ENCODE measurements at regions of chr22 and their contacts with region 1.

Region 1: DNA sequence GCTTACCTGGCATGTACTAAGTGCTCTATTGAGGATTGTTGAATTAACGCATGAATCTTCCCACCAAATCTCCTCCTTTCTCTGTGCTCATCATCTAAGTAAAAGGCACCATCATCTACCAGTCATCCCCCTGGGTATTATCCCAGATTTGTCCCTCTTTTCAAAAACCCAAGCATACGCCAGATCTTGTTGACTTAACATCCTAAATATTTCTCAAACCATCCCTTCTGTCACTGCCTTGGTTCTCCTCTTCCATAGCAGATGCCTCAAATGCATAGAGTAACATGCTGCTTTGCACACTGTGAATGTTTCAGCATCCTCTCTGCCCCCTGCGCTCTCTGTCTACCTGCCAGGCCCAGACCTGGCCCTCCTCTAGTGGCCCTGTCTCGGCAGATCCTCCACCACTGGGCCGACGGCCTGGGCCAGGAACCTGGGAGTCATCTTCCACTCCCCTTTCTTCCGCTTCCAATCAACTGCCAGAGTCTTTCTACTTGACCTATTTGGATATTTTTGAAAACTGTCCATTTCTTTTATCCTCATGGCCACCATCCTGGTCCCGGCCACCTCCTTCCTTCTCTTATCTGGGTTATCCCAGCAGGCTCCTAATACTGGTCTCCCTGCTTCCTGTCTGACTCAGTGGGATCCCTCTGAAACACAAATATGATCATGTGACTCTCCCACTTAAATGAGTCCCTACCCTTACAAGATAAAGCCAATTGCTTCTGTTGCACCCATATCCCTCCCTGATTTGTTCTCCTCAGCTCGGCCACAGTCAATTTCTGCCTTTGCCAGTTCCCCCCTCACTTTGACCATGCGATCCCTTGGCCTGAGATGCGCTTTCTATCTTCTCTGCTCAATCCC is 3.4 kb upstream of the TAB1 start:
- DNase-seq: no peak
- H3K4me3 ChIP-seq: no peak overlapping the region
- H3K4me3 Mint-ChIP-seq: peak overlapping the region in 2 of 8 donors; percentile 37 to 45
- H3K27ac ChIP-seq: no peak overlapping the region
- H3K27ac Mint-ChIP-seq: peak overlapping the region in 2 of 7 donors; percentile 20 to 39
- H3K4me1 ChIP-seq: peaks cover 12% of the 10 kb centered on the region
- H3K4me1 Mint-ChIP-seq: peaks cover 4 to 19% (median 11%) of the 10 kb centered on the region in 4 donors
- H3K27me3 ChIP-seq: no peaks in the 10 kb centered on the region
- H3K27me3 Mint-ChIP-seq: no peaks in the 10 kb centered on the region

Region 2: DNA sequence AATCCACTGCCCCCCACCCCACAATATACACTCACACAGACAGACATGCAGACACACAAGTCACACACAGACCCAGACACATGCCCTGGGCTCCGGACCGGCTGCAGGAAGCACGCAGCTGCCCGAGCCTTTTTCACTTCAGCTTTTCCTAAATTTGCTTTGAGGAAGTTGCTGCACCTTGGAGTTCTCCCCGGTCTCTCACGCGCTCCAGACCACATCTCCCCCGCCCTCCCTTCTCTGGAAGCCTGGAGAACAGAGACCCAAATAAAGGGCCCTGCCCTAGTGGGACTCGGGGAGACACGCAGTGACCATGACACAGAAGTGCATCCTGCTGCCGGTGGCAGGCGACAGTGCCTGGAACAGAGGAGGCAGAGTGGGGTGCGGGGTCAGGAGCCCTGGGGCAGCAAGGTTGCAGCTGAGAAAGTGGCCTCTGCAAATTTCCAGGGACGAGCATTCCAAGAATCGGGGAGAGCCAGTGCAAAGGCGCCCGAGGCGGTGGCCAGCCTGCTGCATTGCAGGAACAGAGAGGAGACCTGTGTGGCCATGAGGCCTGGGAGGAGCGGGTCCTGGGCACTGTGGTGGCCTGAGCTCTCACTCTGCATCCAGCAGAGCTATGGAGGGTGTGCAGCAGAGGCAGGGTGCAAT is 95.9 kb before region 1 on chr22:
- CTCF ChIA-PET with region 1: no interaction called
- POLR2A ChIA-PET with region 1: no interaction called
- intact Hi-C with region 1: no loop called
- DNase-seq: no peak
- H3K4me3 ChIP-seq: no peak overlapping the region
- H3K4me3 Mint-ChIP-seq: no peak overlapping the region
- H3K27ac ChIP-seq: no peak overlapping the region
- H3K27ac Mint-ChIP-seq: no peak overlapping the region
- H3K4me1 ChIP-seq: peaks cover 6% of the 10 kb centered on the region
- H3K4me1 Mint-ChIP-seq: peaks cover 2 to 12% (median 7%) of the 10 kb centered on the region in 4 donors
- H3K27me3 ChIP-seq: no peaks in the 10 kb centered on the region
- H3K27me3 Mint-ChIP-seq: peaks cover 15 to 20% of the 10 kb centered on the region in 2 donors

Region 3: GRCh38 chr22:39332441-39333064 is 63.6 kb before region 1 on chr22:
- CTCF ChIA-PET with region 1: interaction called, 10 read pairs
- POLR2A ChIA-PET with region 1: no interaction called
- intact Hi-C with region 1: no loop called
- DNase-seq: no peak
- H3K4me3 ChIP-seq: no peak overlapping the region
- H3K4me3 Mint-ChIP-seq: no peak overlapping the region
- H3K27ac ChIP-seq: no peak overlapping the region
- H3K27ac Mint-ChIP-seq: peak overlapping the region in 3 of 7 donors; percentile 23 to 64 (median 36)
- H3K4me1 ChIP-seq: no peaks in the 10 kb centered on the region
- H3K4me1 Mint-ChIP-seq: peaks cover 0 to 17% (median 4%) of the 10 kb centered on the region in 4 donors
- H3K27me3 ChIP-seq: no peaks in the 10 kb centered on the region
- H3K27me3 Mint-ChIP-seq: peaks cover 0 to 1% of the 10 kb centered on the region in 2 donors

Region 4: DNA sequence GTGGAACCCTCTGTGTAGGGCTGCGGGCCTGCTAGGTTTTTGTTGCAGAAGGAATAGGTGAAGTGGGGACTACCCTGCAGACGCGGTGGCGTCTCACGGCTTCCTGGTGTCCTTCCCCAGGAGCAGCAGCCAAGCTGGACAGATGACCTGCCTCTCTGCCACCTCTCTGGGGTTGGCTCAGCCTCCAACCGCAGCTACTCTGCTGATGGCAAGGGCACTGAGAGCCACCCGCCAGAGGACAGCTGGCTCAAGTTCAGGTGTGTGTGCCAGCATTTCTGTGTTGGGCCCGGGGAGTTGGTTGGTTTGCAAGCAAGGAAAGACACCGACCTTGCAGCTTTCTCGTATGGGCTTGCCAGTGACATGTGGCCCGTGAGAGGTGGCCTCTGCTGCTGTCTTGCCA is 18.7 kb after region 1 on chr22:
- CTCF ChIA-PET with region 1: interaction called, 16 read pairs
- POLR2A ChIA-PET with region 1: interaction called, 36 read pairs
- intact Hi-C with region 1: loop called (anchors 1 kb)
- DNase-seq: no peak
- H3K4me3 ChIP-seq: no peak overlapping the region
- H3K4me3 Mint-ChIP-seq: no peak overlapping the region
- H3K27ac ChIP-seq: no peak overlapping the region
- H3K27ac Mint-ChIP-seq: peak overlapping the region in 1 of 7 donors; percentile 47
- H3K4me1 ChIP-seq: peaks cover 32% of the 10 kb centered on the region
- H3K4me1 Mint-ChIP-seq: peaks cover 22 to 40% (median 31%) of the 10 kb centered on the region in 4 donors
- H3K27me3 ChIP-seq: no peaks in the 10 kb centered on the region
- H3K27me3 Mint-ChIP-seq: no peaks in the 10 kb centered on the region

Region 5: DNA sequence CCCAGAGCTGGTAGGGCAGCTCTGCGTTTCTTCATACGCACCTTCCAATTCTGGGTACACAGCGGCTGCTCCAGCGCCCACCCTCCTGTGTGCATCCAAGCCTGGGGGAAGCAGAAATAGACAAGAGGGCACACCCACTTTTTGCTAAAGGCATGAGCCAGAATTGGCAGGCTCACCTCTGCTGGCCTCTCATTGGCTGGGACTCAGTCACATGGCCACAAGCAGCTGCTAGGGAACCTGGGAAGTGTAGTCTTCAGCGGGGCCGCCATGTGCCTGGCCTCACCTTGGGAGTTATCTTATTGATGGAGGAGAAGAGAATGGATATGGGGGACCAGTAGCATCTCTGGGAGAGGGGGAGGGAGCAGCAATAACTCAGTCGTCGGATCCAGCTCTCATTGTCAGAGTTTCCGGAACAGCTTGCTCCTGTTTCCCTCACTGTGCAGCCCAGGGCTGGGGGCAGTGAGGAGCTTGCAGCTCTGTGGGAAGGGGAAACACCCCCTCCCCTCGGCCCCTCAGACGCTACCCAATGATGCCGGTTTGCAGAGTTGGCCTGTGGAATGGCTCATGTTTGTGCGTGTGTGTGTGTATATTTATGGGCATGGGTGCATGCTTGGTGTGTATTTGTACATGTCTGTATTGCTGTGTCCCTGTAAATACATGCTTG is 94.1 kb after region 1 on chr22:
- CTCF ChIA-PET with region 1: interaction called, 18 read pairs
- POLR2A ChIA-PET with region 1: interaction called, 10 read pairs
- intact Hi-C with region 1: no loop called
- DNase-seq: peak; percentile 66 to 83 (median 77)
- H3K4me3 ChIP-seq: no peak overlapping the region
- H3K4me3 Mint-ChIP-seq: peak overlapping the region in 2 of 8 donors; percentile 17 to 71
- H3K27ac ChIP-seq: no peak overlapping the region
- H3K27ac Mint-ChIP-seq: peak overlapping the region in 6 of 7 donors; percentile 10 to 81 (median 44)
- H3K4me1 ChIP-seq: peaks cover 6% of the 10 kb centered on the region
- H3K4me1 Mint-ChIP-seq: peaks cover 5 to 13% (median 9%) of the 10 kb centered on the region in 4 donors
- H3K27me3 ChIP-seq: no peaks in the 10 kb centered on the region
- H3K27me3 Mint-ChIP-seq: no peaks in the 10 kb centered on the region

Region 6: GRCh38 chr22:39502109-39502788 is 106.1 kb after region 1 on chr22 and contains the start of gene MIEF1:
- CTCF ChIA-PET with region 1: interaction called, 3 read pairs
- POLR2A ChIA-PET with region 1: interaction called, 6 read pairs
- intact Hi-C with region 1: loop called (anchors 2 kb)
- DNase-seq: peak; percentile 79 to 91 (median 82)
- H3K4me3 ChIP-seq: peak within 1 kb of the TSS; percentile 63 to 66
- H3K4me3 Mint-ChIP-seq: peak within 1 kb of the TSS; percentile 95 to 99 (median 96)
- H3K27ac ChIP-seq: peak within 1 kb of the TSS; percentile 70
- H3K27ac Mint-ChIP-seq: peak within 1 kb of the TSS; percentile 78 to 98 (median 96)
- H3K4me1 ChIP-seq: peaks cover 31% of the 10 kb centered on the region
- H3K4me1 Mint-ChIP-seq: peaks cover 13 to 50% (median 35%) of the 10 kb centered on the region in 4 donors
- H3K27me3 ChIP-seq: no peaks in the 10 kb centered on the region
- H3K27me3 Mint-ChIP-seq: no peaks in the 10 kb centered on the region
- total RNA-seq, gene MIEF1: 40.5 to 44.3 TPM

Region 7: GRCh38 chr22:39514373-39514973 is 118.3 kb after region 1 on chr22:
- CTCF ChIA-PET with region 1: interaction called, 10 read pairs
- POLR2A ChIA-PET with region 1: interaction called, 16 read pairs
- intact Hi-C with region 1: no loop called
- DNase-seq: peak in 3 of 5 donors; percentile 33 to 44 (median 36)
- H3K4me3 ChIP-seq: no peak overlapping the region
- H3K4me3 Mint-ChIP-seq: no peak overlapping the region
- H3K27ac ChIP-seq: no peak overlapping the region
- H3K27ac Mint-ChIP-seq: peak overlapping the region in 4 of 7 donors; percentile 4 to 79 (median 17)
- H3K4me1 ChIP-seq: peaks cover 14% of the 10 kb centered on the region
- H3K4me1 Mint-ChIP-seq: peaks cover 11 to 30% (median 17%) of the 10 kb centered on the region in 4 donors
- H3K27me3 ChIP-seq: no peaks in the 10 kb centered on the region
- H3K27me3 Mint-ChIP-seq: no peaks in the 10 kb centered on the region

Region 8: GRCh38 chr22:39520054-39520891 is 124.1 kb after region 1 on chr22 and contains the start of gene ATF4:
- CTCF ChIA-PET with region 1: interaction called, 10 read pairs
- POLR2A ChIA-PET with region 1: interaction called, 16 read pairs
- intact Hi-C with region 1: loop called (anchors 1 kb)
- DNase-seq: peak; percentile 96 to 98 (median 97)
- H3K4me3 ChIP-seq: peak within 1 kb of the TSS; percentile 85 to 96
- H3K4me3 Mint-ChIP-seq: peak within 1 kb of the TSS; percentile 92 to 99 (median 97)
- H3K27ac ChIP-seq: peak within 1 kb of the TSS; percentile 85
- H3K27ac Mint-ChIP-seq: peak within 1 kb of the TSS; percentile 96 to 100 (median 99)
- H3K4me1 ChIP-seq: peaks cover 46% of the 10 kb centered on the region
- H3K4me1 Mint-ChIP-seq: peaks cover 28 to 60% (median 47%) of the 10 kb centered on the region in 4 donors
- H3K27me3 ChIP-seq: no peaks in the 10 kb centered on the region
- H3K27me3 Mint-ChIP-seq: peaks cover 3 to 4% of the 10 kb centered on the region in 2 donors
- total RNA-seq, gene ATF4: 265 to 278 TPM